CD8-positive, alpha-beta memory T cell (primary cell): ENCODE measurements at regions of chr17 and their contacts with region 1.

Region 1: DNA sequence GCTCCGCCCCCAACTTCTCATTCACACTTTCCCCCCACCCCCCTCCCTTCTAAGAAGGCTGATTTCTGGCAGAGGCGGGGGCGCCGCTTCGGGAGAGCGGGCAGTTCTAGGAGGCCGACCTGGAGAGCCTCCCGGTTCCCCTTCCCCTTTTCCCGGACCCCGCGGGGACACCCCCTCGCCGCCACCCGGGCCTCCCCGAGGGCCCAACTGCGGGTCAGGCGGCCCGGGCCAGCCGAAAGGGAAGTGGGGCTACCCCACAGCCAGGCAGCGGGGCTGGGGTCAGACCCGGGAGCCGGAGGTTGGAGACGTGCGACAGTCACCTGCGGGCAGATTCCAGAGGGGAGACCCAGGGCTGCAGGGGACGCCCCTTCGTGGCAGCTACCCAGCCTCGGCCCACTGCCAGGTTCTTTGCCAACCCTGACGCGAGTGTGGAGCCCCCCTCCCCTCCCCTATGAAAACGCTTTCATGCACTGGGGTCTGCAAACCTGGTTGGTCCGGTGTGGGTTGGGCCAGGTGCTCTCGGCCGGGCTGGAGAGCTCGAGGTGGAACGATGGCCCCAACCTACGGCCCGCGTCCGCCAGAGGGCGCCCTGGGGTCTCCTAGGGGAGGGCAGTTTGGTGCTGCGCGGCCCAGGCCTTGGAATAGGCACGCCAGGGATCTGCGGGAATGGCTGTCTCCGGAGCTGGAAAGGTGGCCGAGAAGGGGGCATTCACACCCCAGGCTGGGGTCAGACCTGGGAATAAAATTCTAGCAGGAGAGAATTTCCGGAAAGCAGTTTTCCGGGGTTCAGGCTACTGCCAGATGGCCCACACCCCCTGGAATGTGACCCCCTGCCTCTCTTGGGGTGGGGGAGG is 721 bp upstream of the SOCS3 start:
- DNase-seq: peak; percentile 78 to 89 (median 85)
- H3K4me3 ChIP-seq: peak overlapping the region; percentile 67
- H3K4me3 Mint-ChIP-seq: peak overlapping the region; percentile 80 to 98 (median 87)
- H3K27ac ChIP-seq: peak overlapping the region; percentile 72
- H3K27ac Mint-ChIP-seq: peak overlapping the region; percentile 53 to 96 (median 86)
- H3K4me1 ChIP-seq: peaks cover 40% of the 10 kb centered on the region
- H3K4me1 Mint-ChIP-seq: peaks cover 30 to 47% (median 36%) of the 10 kb centered on the region in 3 donors
- H3K27me3 ChIP-seq: no peaks in the 10 kb centered on the region
- H3K27me3 Mint-ChIP-seq: no peaks in the 10 kb centered on the region

Region 2: GRCh38 chr17:78250891-78251794 is 109.5 kb before region 1 on chr17:
- CTCF ChIA-PET with region 1: interaction called, 12 read pairs
- POLR2A ChIA-PET with region 1: interaction called, 5 read pairs
- DNase-seq: peak; percentile 74 to 85 (median 77)
- H3K4me3 ChIP-seq: peak overlapping the region; percentile 77
- H3K4me3 Mint-ChIP-seq: peak overlapping the region; percentile 72 to 84 (median 80)
- H3K27ac ChIP-seq: peak overlapping the region; percentile 20
- H3K27ac Mint-ChIP-seq: peak overlapping the region; percentile 16 to 97 (median 94)
- H3K4me1 ChIP-seq: peaks cover 57% of the 10 kb centered on the region
- H3K4me1 Mint-ChIP-seq: peaks cover 33 to 53% (median 39%) of the 10 kb centered on the region in 3 donors
- H3K27me3 ChIP-seq: no peaks in the 10 kb centered on the region
- H3K27me3 Mint-ChIP-seq: peaks cover 0 to 2% of the 10 kb centered on the region in 2 donors

Region 3: GRCh38 chr17:78289802-78290363 is 70.7 kb before region 1 on chr17:
- CTCF ChIA-PET with region 1: interaction called, 10 read pairs
- POLR2A ChIA-PET with region 1: no interaction called
- DNase-seq: peak; percentile 46 to 81 (median 67)
- H3K4me3 ChIP-seq: no peak overlapping the region
- H3K4me3 Mint-ChIP-seq: no peak overlapping the region
- H3K27ac ChIP-seq: no peak overlapping the region
- H3K27ac Mint-ChIP-seq: no peak overlapping the region
- H3K4me1 ChIP-seq: peaks cover 9% of the 10 kb centered on the region
- H3K4me1 Mint-ChIP-seq: no peaks in the 10 kb centered on the region
- H3K27me3 ChIP-seq: no peaks in the 10 kb centered on the region
- H3K27me3 Mint-ChIP-seq: no peaks in the 10 kb centered on the region

Region 4: DNA sequence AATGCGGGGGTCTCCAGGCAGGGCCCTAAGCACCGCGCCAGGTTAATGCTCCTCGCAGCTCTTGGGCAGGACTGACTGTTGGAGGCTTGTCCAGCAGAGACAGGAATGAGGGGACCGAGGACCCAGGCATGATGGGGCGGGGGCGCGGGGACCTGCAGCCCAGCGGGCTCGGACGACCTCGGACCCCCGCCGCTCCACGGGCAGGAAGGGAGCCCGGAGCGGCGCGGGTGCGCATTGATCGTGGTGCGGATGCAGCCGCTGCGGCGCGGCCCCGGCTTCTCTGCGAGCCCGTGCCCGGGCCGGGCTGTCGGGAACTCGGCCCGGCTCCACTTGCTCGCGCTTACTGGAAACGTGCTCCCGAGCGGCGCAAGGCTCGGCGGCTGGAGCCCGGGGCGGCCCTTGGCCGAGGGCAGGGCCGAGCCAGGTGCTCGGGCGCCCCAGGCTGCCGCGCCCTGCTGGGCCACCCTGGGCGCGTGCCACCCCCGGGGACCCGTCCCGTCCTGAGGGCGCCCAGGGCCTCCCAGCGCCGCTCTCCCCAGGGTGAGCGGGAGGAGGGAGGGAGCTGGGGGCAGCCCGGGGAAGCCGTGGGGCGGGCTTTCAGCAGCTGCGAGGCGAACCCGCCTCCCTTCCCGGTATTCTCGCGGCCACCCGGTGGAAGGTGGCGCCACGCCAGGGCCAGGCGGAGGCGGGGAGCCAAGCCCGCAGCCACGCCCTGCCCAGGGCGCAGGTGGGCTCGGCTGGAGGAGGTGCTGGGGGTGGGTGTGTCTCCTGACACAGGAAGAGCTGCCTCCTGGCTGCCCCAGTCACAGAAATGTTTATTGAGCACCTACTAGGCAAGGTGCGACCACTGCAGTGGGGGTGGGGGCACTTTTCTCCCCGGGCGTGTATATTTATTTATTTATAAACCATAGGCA is 46.6 kb before region 1 on chr17:
- CTCF ChIA-PET with region 1: interaction called, 10 read pairs
- POLR2A ChIA-PET with region 1: no interaction called
- DNase-seq: peak; percentile 45 to 76 (median 69)
- H3K4me3 ChIP-seq: peak overlapping the region; percentile 26
- H3K4me3 Mint-ChIP-seq: peak overlapping the region; percentile 58 to 91 (median 71)
- H3K27ac ChIP-seq: no peak overlapping the region
- H3K27ac Mint-ChIP-seq: peak overlapping the region in 7 of 8 donors; percentile 32 to 74 (median 63)
- H3K4me1 ChIP-seq: peaks cover 36% of the 10 kb centered on the region
- H3K4me1 Mint-ChIP-seq: peaks cover 28 to 43% (median 30%) of the 10 kb centered on the region in 3 donors
- H3K27me3 ChIP-seq: no peaks in the 10 kb centered on the region
- H3K27me3 Mint-ChIP-seq: no peaks in the 10 kb centered on the region

Region 5: DNA sequence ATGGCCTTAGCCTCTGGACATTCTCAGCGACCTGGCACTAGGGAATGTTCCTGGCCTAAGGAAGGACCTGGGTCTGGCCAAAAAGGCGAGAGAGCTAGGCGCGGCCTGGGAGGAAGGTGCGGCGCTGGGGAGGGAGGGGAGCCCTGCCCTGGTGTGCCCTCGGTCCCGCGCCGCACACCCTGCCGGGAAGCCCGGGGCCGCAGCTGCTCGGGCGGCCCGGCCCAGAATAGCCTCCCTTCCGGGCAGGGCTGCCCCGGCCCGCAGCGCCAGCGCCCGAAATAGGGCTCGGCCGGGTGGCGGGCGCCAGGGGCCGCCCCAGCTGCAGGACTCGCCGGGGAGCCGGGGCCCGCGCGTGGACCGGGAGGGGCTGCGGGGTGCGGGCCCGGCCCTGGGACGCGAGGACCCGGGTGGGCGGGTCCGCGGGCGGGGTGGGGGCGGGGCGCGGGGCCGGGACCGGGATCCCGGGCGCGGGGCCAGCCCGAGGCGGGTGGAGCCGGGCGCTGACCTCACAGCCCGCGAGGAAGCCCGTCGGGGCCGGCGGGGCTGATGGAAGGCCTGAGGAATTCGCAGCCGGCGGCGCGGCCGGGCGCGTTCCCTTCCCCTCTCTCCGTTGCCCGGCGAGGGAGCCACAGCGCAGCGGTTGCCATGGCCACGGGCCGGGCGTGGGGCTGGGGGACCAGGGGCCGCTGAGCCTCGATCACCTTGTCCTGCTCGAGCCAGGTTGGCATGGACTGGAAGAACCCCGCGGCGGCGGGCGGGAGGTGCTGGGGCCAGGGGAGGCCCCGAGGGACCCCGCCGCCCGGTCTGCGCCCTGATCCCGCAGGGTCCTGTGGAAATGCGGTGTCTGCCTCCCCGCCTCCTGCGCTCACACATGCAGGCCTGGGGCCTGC is 18.8 kb before region 1 on chr17:
- CTCF ChIA-PET with region 1: interaction called, 27 read pairs
- POLR2A ChIA-PET with region 1: interaction called, 17 read pairs
- DNase-seq: peak in 1 of 5 donors; percentile 39
- H3K4me3 ChIP-seq: no peak overlapping the region
- H3K4me3 Mint-ChIP-seq: peak overlapping the region in 5 of 7 donors; percentile 37 to 68 (median 54)
- H3K27ac ChIP-seq: no peak overlapping the region
- H3K27ac Mint-ChIP-seq: no peak overlapping the region
- H3K4me1 ChIP-seq: peaks cover 73% of the 10 kb centered on the region
- H3K4me1 Mint-ChIP-seq: peaks cover 55 to 66% (median 59%) of the 10 kb centered on the region in 3 donors
- H3K27me3 ChIP-seq: no peaks in the 10 kb centered on the region
- H3K27me3 Mint-ChIP-seq: no peaks in the 10 kb centered on the region

Region 6: DNA sequence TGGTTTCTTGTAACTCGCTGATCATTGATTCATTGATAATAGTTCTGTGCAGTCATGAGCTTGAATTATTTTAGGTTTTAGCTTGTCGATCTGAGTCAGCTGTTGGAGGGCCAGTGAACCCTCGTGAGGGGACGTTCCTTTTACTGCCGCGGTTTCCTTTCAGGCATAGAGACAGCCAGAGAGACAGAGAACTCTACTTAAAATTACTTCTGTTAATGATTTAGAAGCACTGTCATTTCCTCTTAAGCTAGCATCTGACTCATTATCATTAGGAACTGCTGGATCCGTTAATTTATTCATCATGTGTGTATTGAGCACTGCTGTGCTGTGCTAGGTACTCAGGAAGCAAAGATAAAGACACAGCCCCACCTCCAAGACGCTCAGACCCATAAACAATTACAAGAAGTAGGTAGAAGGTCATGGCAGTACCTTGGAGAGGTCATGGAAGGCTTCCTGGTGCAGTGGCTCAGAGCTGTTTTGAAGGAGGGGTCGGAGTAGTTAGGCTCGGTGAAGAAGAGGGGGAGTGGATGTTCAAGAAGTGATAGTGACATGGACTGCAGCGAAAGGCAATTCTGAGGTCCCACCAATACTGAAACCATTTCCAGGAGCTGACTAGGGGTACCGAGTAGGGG is 21.1 kb after region 1 on chr17:
- CTCF ChIA-PET with region 1: interaction called, 14 read pairs
- POLR2A ChIA-PET with region 1: interaction called, 4 read pairs
- DNase-seq: peak in 3 of 5 donors; percentile 13 to 68 (median 56)
- H3K4me3 ChIP-seq: peak overlapping the region; percentile 17
- H3K4me3 Mint-ChIP-seq: peak overlapping the region; percentile 69 to 95 (median 79)
- H3K27ac ChIP-seq: peak overlapping the region; percentile 49
- H3K27ac Mint-ChIP-seq: peak overlapping the region; percentile 83 to 94 (median 88)
- H3K4me1 ChIP-seq: peaks cover 74% of the 10 kb centered on the region
- H3K4me1 Mint-ChIP-seq: peaks cover 71 to 77% (median 73%) of the 10 kb centered on the region in 3 donors
- H3K27me3 ChIP-seq: no peaks in the 10 kb centered on the region
- H3K27me3 Mint-ChIP-seq: peaks cover 0 to 1% of the 10 kb centered on the region in 2 donors

Region 7: DNA sequence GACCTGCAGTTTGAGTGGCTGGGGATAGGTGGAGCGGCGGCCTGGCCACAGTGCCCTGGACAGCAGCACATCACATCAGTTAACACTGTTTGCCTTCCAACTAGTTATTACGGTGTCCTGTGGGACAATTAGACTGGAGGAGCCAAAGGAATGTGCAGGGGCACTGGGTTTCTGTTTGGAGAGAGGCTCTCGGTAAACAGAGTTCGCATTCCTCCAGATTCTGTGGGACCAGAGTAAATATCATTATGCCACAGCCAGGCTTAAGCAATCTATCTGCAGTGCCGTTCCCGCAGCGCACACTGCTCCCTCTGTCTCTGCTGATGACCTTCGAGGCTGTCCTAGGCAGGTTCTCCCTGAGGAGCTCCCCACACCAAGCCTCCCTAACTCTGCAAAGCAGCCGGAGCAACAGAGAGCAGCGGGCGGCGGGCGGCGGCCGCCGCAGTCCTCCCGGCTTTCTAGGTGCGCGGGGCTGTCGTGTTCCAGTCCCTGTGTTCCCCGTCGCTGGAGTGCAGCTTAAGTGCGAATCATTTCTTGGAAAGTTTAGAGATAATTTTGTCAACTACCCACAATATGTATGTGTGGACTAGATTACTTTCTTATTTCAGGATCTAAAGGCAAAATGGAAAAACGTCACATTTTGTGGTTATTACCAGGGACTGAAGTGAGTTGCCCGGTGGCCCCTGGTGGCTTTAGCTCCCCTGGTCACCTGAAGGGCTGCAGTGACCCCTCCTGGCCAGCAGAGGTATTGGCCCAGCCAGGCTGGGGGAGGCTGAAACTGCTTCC is 61.1 kb after region 1 on chr17:
- CTCF ChIA-PET with region 1: interaction called, 15 read pairs
- POLR2A ChIA-PET with region 1: no interaction called
- DNase-seq: peak; percentile 51 to 79 (median 63)
- H3K4me3 ChIP-seq: no peak overlapping the region
- H3K4me3 Mint-ChIP-seq: no peak overlapping the region
- H3K27ac ChIP-seq: no peak overlapping the region
- H3K27ac Mint-ChIP-seq: peak overlapping the region in 5 of 8 donors; percentile 17 to 63 (median 54)
- H3K4me1 ChIP-seq: peaks cover 11% of the 10 kb centered on the region
- H3K4me1 Mint-ChIP-seq: peaks cover 9 to 29% (median 13%) of the 10 kb centered on the region in 3 donors
- H3K27me3 ChIP-seq: no peaks in the 10 kb centered on the region
- H3K27me3 Mint-ChIP-seq: no peaks in the 10 kb centered on the region

Region 8: GRCh38 chr17:78510141-78511075 is 149.8 kb after region 1 on chr17:
- CTCF ChIA-PET with region 1: no interaction called
- POLR2A ChIA-PET with region 1: no interaction called
- DNase-seq: no peak
- H3K4me3 ChIP-seq: no peak overlapping the region
- H3K4me3 Mint-ChIP-seq: no peak overlapping the region
- H3K27ac ChIP-seq: no peak overlapping the region
- H3K27ac Mint-ChIP-seq: no peak overlapping the region
- H3K4me1 ChIP-seq: no peaks in the 10 kb centered on the region
- H3K4me1 Mint-ChIP-seq: no peaks in the 10 kb centered on the region
- H3K27me3 ChIP-seq: no peaks in the 10 kb centered on the region
- H3K27me3 Mint-ChIP-seq: peaks cover 6 to 23% of the 10 kb centered on the region in 2 donors

Region 9: GRCh38 chr17:78541488-78542237 is 181.1 kb after region 1 on chr17:
- CTCF ChIA-PET with region 1: no interaction called
- POLR2A ChIA-PET with region 1: no interaction called
- DNase-seq: no peak
- H3K4me3 ChIP-seq: no peak overlapping the region
- H3K4me3 Mint-ChIP-seq: no peak overlapping the region
- H3K27ac ChIP-seq: no peak overlapping the region
- H3K27ac Mint-ChIP-seq: peak overlapping the region in 1 of 8 donors; percentile 5
- H3K4me1 ChIP-seq: no peaks in the 10 kb centered on the region
- H3K4me1 Mint-ChIP-seq: peaks cover 0 to 4% (median 0%) of the 10 kb centered on the region in 3 donors
- H3K27me3 ChIP-seq: no peaks in the 10 kb centered on the region
- H3K27me3 Mint-ChIP-seq: peaks cover 4 to 13% of the 10 kb centered on the region in 2 donors

Region 10: DNA sequence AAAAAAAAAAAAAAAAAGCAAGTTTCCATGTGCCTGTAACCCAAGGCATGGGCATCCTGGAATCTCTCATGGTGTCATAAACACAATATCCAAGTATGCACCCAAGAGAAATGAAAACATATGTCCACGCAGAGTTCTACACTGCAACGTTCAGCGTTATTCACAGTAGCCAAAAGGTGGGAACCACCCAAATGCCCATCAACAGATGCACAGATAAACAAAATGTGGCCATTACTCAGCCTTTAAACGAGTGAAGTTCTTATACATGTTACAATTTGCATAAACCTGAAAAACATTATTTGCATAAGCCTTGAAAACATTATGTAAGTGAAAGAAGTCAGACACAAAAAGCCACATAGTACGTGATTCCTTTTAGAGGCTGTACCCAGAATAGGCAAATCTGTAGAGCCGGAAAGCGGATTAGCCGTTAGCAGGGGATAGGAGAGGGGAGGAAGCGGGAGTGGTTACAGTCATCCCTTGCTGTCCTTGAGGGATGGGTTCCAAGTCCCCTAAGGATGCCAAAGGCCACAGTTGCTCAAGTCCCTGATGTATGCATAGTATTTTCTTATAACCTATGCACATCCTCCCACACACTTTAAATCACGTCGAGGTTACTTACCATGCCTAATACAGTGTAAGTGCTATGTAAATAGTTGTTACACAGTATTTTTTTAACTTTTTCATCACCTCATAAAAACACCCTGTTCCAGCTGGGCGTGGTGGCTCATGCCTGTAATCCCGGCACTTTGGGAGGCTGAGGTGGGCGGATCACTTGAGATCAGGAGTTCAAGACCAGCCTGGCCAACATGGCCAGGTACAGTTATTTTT is 263.9 kb after region 1 on chr17:
- CTCF ChIA-PET with region 1: no interaction called
- POLR2A ChIA-PET with region 1: no interaction called
- DNase-seq: no peak
- H3K4me3 ChIP-seq: no peak overlapping the region
- H3K4me3 Mint-ChIP-seq: no peak overlapping the region
- H3K27ac ChIP-seq: no peak overlapping the region
- H3K27ac Mint-ChIP-seq: no peak overlapping the region
- H3K4me1 ChIP-seq: no peaks in the 10 kb centered on the region
- H3K4me1 Mint-ChIP-seq: no peaks in the 10 kb centered on the region
- H3K27me3 ChIP-seq: no peaks in the 10 kb centered on the region
- H3K27me3 Mint-ChIP-seq: no peaks in the 10 kb centered on the region